ENCODE measurements at regions of chr5 and their contacts with region 1.

Region 1: DNA sequence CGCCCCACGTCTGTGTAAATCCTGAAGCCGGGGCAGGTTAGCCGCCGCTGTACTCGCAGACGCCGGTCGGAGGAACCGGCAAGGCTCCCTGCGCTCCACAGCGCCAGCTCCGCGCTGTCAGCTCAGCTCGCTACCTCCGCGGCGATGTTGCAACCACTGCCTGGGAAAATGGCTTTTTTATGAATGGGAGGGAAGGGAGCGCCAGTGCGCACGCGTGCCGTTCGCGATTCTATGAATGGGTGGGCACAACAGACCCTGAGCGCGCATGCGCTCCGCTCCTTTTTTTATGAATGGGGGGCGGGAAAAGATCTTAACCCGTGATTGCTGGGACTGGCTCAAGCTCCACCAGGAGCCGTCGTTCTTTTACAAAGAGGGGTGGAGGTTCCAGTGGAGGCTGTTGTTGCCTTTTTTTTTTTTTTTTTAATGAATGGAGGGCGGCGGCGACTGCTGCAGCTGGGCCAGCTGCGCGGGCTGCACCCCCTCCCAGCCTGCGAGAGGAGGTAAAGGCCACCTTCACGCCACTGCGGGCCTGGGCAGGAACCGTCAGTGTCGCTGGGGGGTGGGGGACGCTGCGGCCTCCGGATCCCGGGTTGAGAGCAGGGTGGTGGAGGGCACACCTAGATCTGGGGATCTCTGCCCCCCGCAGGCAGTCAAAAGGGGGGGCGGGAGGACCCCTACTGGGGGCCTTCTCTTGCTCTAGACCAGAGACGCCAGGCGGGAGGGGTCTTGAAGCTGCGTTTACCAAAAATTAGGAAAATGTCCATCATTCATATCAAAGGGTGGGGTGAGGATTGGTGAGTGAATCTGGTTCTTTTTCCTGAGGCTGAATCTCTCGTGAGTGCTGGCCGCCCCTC is at the start of gene SPRY4:
- DNase-seq: peak; percentile 91 to 98 (median 94)
- ATAC-seq: peak; percentile 64
- H3K4me3 ChIP-seq: peak within 1 kb of the TSS; percentile 83
- H3K27ac ChIP-seq: peak within 1 kb of the TSS; percentile 96
- H3K4me1 ChIP-seq: peaks cover 47 to 58% of the 10 kb centered on the region in 2 experiments
- H3K27me3 ChIP-seq: no peaks in the 10 kb centered on the region
- CTCF ChIP-seq: peak in 2 of 3 experiments; percentile 2 to 10; a peak in 1 of 6 replicates
- EP300 ChIP-seq: no peak; the same call in none of the 2 replicates
- POLR2A ChIP-seq: peak; percentile 94
- RAD21 ChIP-seq: peak in 1 of 2 experiments; percentile 42; a peak in 3 of 4 replicates
- polyA plus RNA-seq, gene SPRY4: 2.6 to 3.1 TPM

Region 2: GRCh38 chr5:142151436-142152383 is 173.4 kb before region 1 on chr5:
- CTCF ChIA-PET with region 1: no interaction called
- POLR2A ChIA-PET with region 1: no interaction called
- in situ Hi-C with region 1: no loop called
- intact Hi-C with region 1: loop called (anchors 5 kb)
- DNase-seq: peak; percentile 50 to 76 (median 60)
- ATAC-seq: peak; percentile 85
- H3K4me3 ChIP-seq: no peak overlapping the region
- H3K27ac ChIP-seq: no peak overlapping the region
- H3K4me1 ChIP-seq: no peaks in the 10 kb centered on the region
- H3K27me3 ChIP-seq: no peaks in the 10 kb centered on the region
- CTCF ChIP-seq: peak; percentile 63 to 93 (median 66); a peak in 5 of 6 replicates
- EP300 ChIP-seq: no peak
- POLR2A ChIP-seq: no peak
- RAD21 ChIP-seq: peak; percentile 92 to 93

Region 3: DNA sequence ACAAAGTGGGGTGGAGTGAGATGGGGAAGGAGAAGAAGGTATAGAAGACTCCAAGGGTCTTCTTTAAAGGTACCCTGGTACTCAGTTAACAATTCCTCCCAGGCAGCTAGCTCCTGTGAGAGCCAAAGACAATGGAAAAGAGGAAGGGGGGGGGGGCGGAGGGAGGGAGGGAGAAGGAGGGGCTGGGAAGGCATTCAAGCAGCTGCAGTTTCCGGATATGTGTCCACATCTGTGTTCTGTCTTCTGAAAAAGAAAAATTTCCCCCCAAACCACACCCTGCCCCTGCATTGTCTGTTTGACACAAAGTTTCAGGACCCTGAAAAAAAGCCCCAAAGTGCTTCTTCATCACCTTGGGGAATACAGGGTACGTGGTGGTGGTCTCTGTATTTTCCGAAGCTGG is 11.4 kb before region 1 on chr5:
- CTCF ChIA-PET with region 1: no interaction called
- POLR2A ChIA-PET with region 1: interaction called, 13 read pairs
- in situ Hi-C with region 1: no loop called
- intact Hi-C with region 1: no loop called
- DNase-seq: no peak
- ATAC-seq: no peak
- H3K4me3 ChIP-seq: no peak overlapping the region
- H3K27ac ChIP-seq: no peak overlapping the region
- H3K4me1 ChIP-seq: peaks cover 0 to 6% of the 10 kb centered on the region in 2 experiments; a peak in 1 of 5 replicates
- H3K27me3 ChIP-seq: no peaks in the 10 kb centered on the region
- CTCF ChIP-seq: no peak
- EP300 ChIP-seq: no peak
- POLR2A ChIP-seq: no peak
- RAD21 ChIP-seq: no peak

Region 4: DNA sequence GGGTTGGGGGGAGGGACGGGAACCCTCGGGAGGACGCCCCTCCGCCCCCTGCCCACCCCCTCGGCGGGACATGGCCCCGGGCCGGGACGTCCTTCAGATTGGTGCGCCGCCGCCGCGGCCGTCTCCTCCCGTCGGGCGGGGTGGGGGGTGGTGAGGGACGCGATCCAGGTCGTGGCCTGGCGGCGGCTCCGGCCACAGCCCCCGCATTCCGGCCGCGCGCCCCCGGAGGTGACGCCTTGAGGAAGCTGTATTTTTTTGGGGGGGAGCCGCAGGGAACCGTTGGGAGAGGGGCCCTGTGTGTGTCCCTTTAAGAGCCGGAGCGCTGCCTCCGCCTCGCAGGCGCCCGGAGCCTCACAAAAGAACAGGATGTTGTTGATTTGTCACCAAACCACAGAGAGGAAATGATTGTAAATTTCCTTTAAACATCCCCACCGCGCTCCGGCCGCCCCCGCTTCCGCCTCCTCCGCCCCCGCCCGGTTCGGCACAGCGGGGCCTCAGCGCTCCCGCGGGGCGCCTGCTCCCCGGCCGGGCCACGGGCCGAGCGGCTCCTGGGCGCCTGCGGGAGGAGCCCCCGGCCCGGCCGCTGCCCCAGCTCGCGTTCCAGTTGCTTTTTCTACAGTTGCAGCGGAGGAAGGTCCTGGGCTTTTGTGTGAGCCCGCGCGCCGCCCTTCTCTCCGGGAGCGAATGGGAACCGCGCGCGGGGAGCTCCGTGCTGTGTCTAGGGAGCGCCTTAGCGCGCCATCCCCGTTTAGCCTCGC is 31.8 kb after region 1 on chr5:
- CTCF ChIA-PET with region 1: no interaction called
- POLR2A ChIA-PET with region 1: interaction called, 5 read pairs
- in situ Hi-C with region 1: no loop called
- intact Hi-C with region 1: loop called (anchors 1 kb)
- DNase-seq: peak; percentile 85 to 93 (median 88)
- ATAC-seq: peak; percentile 91
- H3K4me3 ChIP-seq: peak overlapping the region; percentile 56
- H3K27ac ChIP-seq: peak overlapping the region; percentile 90
- H3K4me1 ChIP-seq: peaks cover 19 to 32% of the 10 kb centered on the region in 2 experiments
- H3K27me3 ChIP-seq: no peaks in the 10 kb centered on the region; a peak in 1 of 5 replicates
- CTCF ChIP-seq: no peak
- EP300 ChIP-seq: peak; percentile 95
- POLR2A ChIP-seq: peak; percentile 70
- RAD21 ChIP-seq: peak in 1 of 2 experiments; percentile 43

Region 5: DNA sequence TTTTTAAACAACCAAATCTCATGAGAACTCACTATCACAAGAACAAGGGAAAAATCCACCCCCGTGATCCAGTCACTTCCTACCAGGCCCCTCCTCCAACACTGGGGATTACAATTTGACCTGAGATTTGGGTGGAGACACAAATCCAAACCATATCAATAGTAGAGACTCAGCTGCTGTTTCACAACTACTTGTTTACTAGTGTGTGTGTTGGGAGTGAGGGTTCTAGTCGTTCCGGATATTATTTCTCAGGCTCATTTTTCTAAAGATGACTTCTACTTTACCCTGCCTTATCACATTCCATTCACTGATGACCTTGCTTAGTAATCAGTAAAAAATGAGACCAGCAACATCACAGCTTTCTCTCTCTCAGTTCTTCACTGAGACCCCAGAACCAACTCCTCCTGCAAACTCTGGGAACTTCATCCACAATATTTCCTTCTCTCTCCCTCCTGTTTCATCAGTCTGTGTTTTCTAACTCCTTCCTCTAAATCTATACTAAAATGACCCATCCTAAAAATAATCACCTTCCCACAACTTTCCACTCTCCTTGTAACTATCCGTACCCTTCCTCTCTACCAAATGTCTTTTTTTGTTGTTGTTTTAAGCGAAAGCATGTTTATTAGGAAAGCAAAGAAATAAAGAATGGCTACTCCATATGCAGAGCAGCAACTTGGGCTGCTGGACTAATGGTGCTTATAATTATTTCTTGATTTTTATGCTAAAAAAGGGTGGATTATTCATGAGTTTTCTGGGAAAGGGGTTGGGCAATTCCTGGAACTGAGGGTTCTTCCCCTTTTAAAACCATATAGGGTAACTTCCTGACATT is 121.2 kb after region 1 on chr5:
- CTCF ChIA-PET with region 1: no interaction called
- POLR2A ChIA-PET with region 1: no interaction called
- in situ Hi-C with region 1: no loop called
- intact Hi-C with region 1: loop called (anchors 5 kb)
- DNase-seq: peak in 2 of 4 experiments; percentile 26 to 83
- ATAC-seq: peak; percentile 63
- H3K4me3 ChIP-seq: no peak overlapping the region
- H3K27ac ChIP-seq: peak overlapping the region; percentile 79
- H3K4me1 ChIP-seq: peaks cover 5 to 27% of the 10 kb centered on the region in 2 experiments
- H3K27me3 ChIP-seq: no peaks in the 10 kb centered on the region
- CTCF ChIP-seq: no peak
- EP300 ChIP-seq: peak; percentile 32; the same call in 1 of the 2 replicates
- POLR2A ChIP-seq: peak; percentile 37; the same call in 1 of the 2 replicates
- RAD21 ChIP-seq: no peak; a peak in 1 of 4 replicates

Region 6: GRCh38 chr5:142548739-142549275 is 223.7 kb after region 1 on chr5:
- CTCF ChIA-PET with region 1: interaction called, 4 read pairs
- POLR2A ChIA-PET with region 1: interaction called, 4 read pairs
- in situ Hi-C with region 1: no loop called
- intact Hi-C with region 1: loop called (anchors 2 kb)
- DNase-seq: peak; percentile 74 to 80 (median 76)
- ATAC-seq: peak; percentile 99
- H3K4me3 ChIP-seq: no peak overlapping the region
- H3K27ac ChIP-seq: no peak overlapping the region
- H3K4me1 ChIP-seq: peaks cover 3 to 6% of the 10 kb centered on the region in 2 experiments; a peak in 3 of 5 replicates
- H3K27me3 ChIP-seq: peaks cover 0 to 22% of the 10 kb centered on the region in 2 experiments; a peak in 3 of 5 replicates
- CTCF ChIP-seq: peak; percentile 83 to 98 (median 96)
- EP300 ChIP-seq: no peak
- POLR2A ChIP-seq: no peak
- RAD21 ChIP-seq: peak; percentile 98